OCI-LY7 (cell line): ENCODE measurements at regions of chr18 and their contacts with region 1.

Region 1: GRCh38 chr18:35972197-35973052 is at the start of gene RMP24:
- DNase-seq: peak; percentile 91
- H3K4me3 ChIP-seq: peak within 1 kb of the TSS; percentile 96
- H3K27ac ChIP-seq: peak within 1 kb of the TSS; percentile 68
- H3K4me1 ChIP-seq: peaks cover 14% of the 10 kb centered on the region
- CTCF ChIP-seq: no peak

Region 2: DNA sequence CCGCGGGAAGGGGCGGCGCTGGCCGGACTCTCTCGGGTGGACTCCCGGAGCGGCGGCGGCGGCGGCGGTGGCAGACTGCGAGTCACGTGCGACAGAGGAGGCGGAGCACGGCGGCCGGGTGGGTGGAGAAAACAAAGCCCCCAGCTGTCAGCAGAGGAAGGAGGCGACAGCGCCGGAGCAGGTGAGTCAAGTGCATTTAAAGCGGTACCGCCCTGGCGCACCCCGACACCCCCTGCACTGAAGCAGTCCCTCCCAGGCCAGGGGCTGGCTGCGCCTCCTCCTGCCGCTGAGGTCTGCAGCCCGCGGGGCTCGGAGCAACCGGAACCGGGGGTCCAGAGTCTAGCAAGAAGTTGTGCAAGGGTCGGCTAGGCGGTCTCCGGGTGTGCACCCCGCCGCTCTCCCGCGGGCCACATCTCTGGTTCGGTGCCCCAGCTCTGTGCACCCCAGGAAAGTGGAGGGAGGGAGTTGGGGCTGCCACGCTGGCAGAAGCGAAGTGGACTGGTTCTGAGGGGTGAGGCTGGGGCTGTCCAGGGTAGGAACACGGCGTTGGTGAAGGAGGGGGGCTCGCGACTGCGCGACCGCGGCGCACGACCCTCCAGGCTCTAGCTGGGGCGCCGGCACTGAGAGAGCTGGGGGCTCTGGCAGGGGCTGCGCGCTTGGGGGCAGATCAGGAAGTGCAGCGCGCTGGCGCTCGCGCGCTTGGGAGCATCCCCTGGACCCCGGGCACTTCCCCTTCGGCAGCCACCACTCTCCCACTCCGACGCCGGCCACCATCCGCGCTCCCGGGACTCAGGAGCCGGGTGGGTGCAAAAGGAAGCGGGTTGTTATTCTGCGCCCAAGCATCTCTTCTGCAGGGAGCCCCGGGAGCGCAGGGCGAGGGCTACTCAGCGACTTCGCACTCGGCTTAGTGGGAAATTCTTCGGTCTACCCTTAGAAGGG is 995.3 kb before region 1 on chr18:
- CTCF ChIA-PET with region 1: no interaction called
- POLR2A ChIA-PET with region 1: no interaction called
- intact Hi-C with region 1: loop called (anchors 10 kb)
- DNase-seq: peak; percentile 72
- H3K4me3 ChIP-seq: peak overlapping the region; percentile 87
- H3K27ac ChIP-seq: no peak overlapping the region
- H3K4me1 ChIP-seq: peaks cover 12% of the 10 kb centered on the region
- CTCF ChIP-seq: no peak

Region 3: DNA sequence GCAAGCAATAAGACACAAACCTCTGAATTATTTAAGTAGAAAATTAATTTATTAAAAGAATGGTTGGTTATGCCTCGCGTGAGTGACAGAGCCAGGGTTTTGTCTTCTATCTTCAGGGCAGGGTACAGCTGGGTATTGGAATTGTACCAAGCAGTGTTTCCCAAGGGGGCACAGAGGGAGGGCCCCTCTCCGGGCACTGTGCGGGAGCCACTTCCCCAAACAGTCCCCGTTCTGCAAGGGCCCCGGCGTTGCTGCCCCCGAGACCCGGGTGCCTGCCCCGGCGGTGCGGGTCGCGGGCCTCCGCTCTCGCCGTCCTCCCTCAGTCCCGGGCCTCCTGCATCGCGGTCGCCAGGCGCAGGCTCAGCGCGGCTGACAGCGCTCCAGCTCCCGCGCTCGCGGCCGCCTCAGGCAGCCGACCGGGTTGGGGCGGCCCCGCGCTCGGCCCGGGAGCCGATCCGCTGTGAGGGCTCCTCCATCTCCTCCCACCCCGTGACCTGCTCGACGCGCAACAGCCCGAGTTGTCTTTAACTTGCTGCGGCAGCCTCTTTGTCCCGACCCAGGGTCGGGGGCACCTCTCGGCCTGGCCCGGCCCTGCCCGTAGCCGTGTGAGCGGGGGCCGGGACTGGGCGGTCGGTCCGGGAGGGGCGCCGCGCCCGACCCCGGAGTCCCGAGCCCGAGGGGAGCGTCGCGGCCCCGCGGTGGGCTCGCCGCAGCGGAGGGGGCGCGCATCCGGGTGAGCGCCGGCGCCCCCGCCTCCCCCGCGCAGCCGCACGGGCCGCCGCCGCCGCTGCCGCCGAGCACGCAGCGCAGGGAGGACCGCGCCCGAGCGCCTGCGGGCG is 391.5 kb before region 1 on chr18:
- CTCF ChIA-PET with region 1: no interaction called
- POLR2A ChIA-PET with region 1: no interaction called
- intact Hi-C with region 1: loop called (anchors 10 kb)
- DNase-seq: peak; percentile 57
- H3K4me3 ChIP-seq: peak overlapping the region; percentile 72
- H3K27ac ChIP-seq: peak overlapping the region; percentile 39
- H3K4me1 ChIP-seq: peaks cover 18% of the 10 kb centered on the region
- CTCF ChIP-seq: no peak